ENCODE measurements at regions of chr11 and their contacts with region 1.

Region 1: GRCh38 chr11:128956401-128957201 is 13.9 kb upstream of the TP53AIP1 start:
- DNase-seq: peak; percentile 77
- H3K4me3 ChIP-seq: no peak overlapping the region
- H3K27ac ChIP-seq: no peak overlapping the region
- H3K4me1 ChIP-seq: no peaks in the 10 kb centered on the region
- H3K27me3 ChIP-seq: peaks cover 10 to 23% of the 10 kb centered on the region in 2 experiments
- CTCF ChIP-seq: peak; percentile 55 to 61
- POLR2A ChIP-seq: no peak

Region 2: GRCh38 chr11:127898422-127899365 is 1057.9 kb before region 1 on chr11:
- CTCF ChIA-PET with region 1: no interaction called
- POLR2A ChIA-PET with region 1: no interaction called
- dilution Hi-C with region 1: no loop called
- intact Hi-C with region 1: no loop called
- DNase-seq: no peak
- H3K4me3 ChIP-seq: no peak overlapping the region
- H3K27ac ChIP-seq: no peak overlapping the region
- H3K4me1 ChIP-seq: no peaks in the 10 kb centered on the region
- H3K27me3 ChIP-seq: no peaks in the 10 kb centered on the region
- CTCF ChIP-seq: no peak
- POLR2A ChIP-seq: no peak

Region 3: GRCh38 chr11:128157423-128158298 is 798.9 kb before region 1 on chr11:
- CTCF ChIA-PET with region 1: interaction called, 14 read pairs
- POLR2A ChIA-PET with region 1: no interaction called
- dilution Hi-C with region 1: no loop called
- intact Hi-C with region 1: no loop called
- DNase-seq: peak; percentile 87
- H3K4me3 ChIP-seq: peak overlapping the region in 1 of 3 experiments; percentile 48
- H3K27ac ChIP-seq: peak overlapping the region; percentile 75
- H3K4me1 ChIP-seq: peaks cover 16% of the 10 kb centered on the region
- H3K27me3 ChIP-seq: no peaks in the 10 kb centered on the region
- CTCF ChIP-seq: peak; percentile 66 to 86
- POLR2A ChIP-seq: no peak

Region 4: GRCh38 chr11:128759597-128759996 is 197.0 kb before region 1 on chr11:
- CTCF ChIA-PET with region 1: no interaction called
- POLR2A ChIA-PET with region 1: no interaction called
- dilution Hi-C with region 1: no loop called
- intact Hi-C with region 1: no loop called
- DNase-seq: no peak
- H3K4me3 ChIP-seq: no peak overlapping the region
- H3K27ac ChIP-seq: peak overlapping the region; percentile 48
- H3K4me1 ChIP-seq: peaks cover 19% of the 10 kb centered on the region
- H3K27me3 ChIP-seq: no peaks in the 10 kb centered on the region
- CTCF ChIP-seq: no peak
- POLR2A ChIP-seq: peak; percentile 55

Region 5: GRCh38 chr11:128874427-128874826 is 82.2 kb before region 1 on chr11:
- CTCF ChIA-PET with region 1: interaction called, 39 read pairs
- POLR2A ChIA-PET with region 1: no interaction called
- dilution Hi-C with region 1: no loop called
- intact Hi-C with region 1: no loop called
- DNase-seq: no peak
- H3K4me3 ChIP-seq: no peak overlapping the region
- H3K27ac ChIP-seq: no peak overlapping the region
- H3K4me1 ChIP-seq: no peaks in the 10 kb centered on the region
- H3K27me3 ChIP-seq: peaks cover 31 to 38% of the 10 kb centered on the region in 2 experiments
- CTCF ChIP-seq: no peak
- POLR2A ChIP-seq: no peak

Region 6: DNA sequence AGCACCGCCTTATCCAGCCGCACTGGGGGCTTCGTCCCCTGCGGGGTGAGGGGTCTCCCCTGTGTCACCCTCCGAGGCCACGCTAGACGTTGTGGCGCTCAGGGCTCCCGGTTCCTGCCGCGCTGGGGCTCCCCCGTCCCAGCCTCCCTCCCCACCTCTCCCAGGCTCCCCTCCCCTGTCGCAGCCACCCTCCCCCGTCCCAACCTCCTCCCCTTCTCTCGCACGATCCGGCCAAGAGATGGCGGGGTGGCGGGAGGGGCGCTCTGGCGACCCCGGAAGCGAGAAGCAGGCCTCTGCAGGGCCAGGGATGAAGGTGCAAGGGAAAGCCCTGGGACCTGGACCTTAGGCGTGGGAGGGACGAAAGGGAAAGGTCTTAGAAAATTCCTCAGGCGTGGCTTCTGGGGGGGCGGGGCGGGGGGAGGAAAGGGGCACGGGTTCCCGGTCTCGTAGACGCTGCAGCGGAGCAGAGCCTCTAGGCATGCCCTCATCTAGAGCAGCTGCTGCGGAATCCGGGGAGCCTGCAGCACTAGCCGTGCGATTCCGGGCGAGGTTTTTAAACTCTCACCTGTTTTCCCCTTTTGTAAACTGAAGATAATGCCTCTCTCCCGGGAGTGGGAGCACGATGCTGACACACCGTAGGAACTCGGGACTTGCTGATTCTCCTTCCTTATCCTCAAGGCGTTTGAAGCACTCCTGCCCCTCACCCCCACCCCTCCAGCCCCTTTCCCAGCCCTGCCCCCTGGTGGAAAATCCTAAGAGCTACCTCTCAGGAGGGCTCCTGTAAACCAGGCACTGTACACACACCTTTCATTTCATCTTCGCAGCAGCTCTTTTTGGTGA is 51.0 kb before region 1 on chr11:
- CTCF ChIA-PET with region 1: interaction called, 31 read pairs
- POLR2A ChIA-PET with region 1: interaction called, 4 read pairs
- dilution Hi-C with region 1: no loop called
- intact Hi-C with region 1: no loop called
- DNase-seq: no peak
- H3K4me3 ChIP-seq: peak overlapping the region in 1 of 3 experiments; percentile 40
- H3K27ac ChIP-seq: no peak overlapping the region
- H3K4me1 ChIP-seq: peaks cover 17% of the 10 kb centered on the region
- H3K27me3 ChIP-seq: peaks cover 22 to 23% of the 10 kb centered on the region in 2 experiments
- CTCF ChIP-seq: peak; percentile 19 to 41
- POLR2A ChIP-seq: no peak

Region 7: DNA sequence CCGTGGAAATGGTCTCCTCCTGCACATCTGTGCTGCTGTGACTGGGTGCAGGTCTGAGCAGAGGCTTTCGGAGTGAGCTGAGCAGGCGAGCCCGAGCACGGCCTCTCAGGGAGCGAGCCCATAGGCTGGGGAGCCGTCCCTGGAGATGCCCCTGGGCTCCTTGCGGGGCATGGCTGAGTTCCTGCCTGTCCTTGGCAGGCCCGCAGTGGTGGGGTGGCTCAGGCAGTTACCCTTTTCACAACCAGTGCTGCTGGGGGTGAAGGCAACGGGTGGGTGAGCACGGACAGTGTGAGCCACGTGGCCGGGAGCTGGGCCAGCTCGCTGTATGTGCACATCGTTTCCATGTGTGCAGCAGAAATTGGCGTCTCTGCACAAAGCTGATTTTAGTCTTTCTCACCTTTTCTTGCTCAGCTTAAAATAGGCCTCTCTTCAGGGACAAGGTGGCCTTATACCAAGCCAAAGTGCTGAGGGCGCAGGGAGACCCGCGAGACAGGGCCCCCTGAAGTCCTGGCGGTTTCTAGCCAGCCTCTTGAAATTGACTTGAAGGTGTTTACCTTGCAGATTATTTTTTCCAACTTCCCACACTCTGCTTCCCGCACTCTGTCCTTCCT is 13.7 kb before region 1 on chr11 and contains the start of gene TP53AIP1:
- CTCF ChIA-PET with region 1: interaction called, 18 read pairs
- POLR2A ChIA-PET with region 1: interaction called, 6 read pairs
- dilution Hi-C with region 1: no loop called
- intact Hi-C with region 1: no loop called
- DNase-seq: no peak
- H3K4me3 ChIP-seq: no peak within 1 kb of the TSS
- H3K27ac ChIP-seq: no peak within 1 kb of the TSS
- H3K4me1 ChIP-seq: no peaks in the 10 kb centered on the region
- H3K27me3 ChIP-seq: peaks cover 0 to 2% of the 10 kb centered on the region in 2 experiments
- CTCF ChIP-seq: no peak
- POLR2A ChIP-seq: no peak
- total RNA-seq, gene TP53AIP1: not detected in 2 replicates

Region 8: GRCh38 chr11:129146191-129146590 is 189.6 kb after region 1 on chr11:
- CTCF ChIA-PET with region 1: no interaction called
- POLR2A ChIA-PET with region 1: no interaction called
- dilution Hi-C with region 1: no loop called
- intact Hi-C with region 1: no loop called
- DNase-seq: no peak
- H3K4me3 ChIP-seq: no peak overlapping the region
- H3K27ac ChIP-seq: no peak overlapping the region
- H3K4me1 ChIP-seq: peaks cover 14% of the 10 kb centered on the region
- H3K27me3 ChIP-seq: no peaks in the 10 kb centered on the region
- CTCF ChIP-seq: no peak
- POLR2A ChIP-seq: no peak

Region 9: DNA sequence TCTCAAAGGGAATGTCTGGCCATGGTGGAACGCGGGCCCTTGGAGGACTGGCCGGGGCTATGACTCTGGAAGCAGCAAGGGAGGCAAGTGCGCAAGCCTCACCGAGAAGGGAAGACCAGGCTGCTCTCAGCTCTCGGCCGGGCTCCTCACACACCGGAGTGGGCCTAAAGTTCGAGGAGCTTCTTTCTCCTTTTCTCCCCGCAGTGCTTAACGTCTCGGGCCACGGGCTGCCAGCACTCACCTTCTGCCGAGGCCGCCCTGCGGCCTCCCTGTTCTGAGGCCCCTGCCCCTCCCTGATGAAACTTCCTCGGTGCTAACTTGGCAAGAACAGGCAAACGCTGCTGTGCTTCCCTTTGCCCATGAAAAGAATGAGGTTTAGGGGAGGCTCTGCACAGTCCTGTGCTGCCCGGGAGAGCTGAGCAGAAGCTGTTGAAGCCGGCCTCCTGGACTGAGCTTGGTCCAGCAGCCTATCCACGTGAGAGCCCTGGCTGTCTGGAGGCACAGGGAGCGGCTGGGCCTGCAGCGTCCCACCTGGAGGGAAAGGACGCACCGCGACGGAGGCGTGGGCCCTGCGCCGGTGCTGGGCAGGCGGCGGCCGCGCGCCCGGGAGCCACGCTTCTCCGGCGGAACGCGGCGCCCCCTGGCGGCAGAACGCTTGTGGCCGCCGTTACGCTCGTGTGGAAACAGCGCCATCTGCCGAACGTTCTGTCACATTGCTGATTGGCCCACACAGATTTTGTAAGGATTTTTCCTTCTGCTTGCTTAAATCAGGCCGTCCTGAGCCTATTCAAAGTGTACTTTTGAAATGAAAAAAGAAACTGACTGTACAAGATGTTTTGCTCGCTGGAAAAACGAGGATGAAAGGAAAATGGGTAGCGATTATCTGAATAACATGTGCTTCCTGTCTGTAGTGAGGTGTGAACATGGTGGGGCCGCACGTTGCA is 794.0 kb after region 1 on chr11:
- CTCF ChIA-PET with region 1: no interaction called
- POLR2A ChIA-PET with region 1: no interaction called
- dilution Hi-C with region 1: no loop called
- intact Hi-C with region 1: loop called (anchors 5 kb)
- DNase-seq: peak; percentile 72
- H3K4me3 ChIP-seq: no peak overlapping the region
- H3K27ac ChIP-seq: no peak overlapping the region
- H3K4me1 ChIP-seq: no peaks in the 10 kb centered on the region
- H3K27me3 ChIP-seq: peaks cover 0 to 4% of the 10 kb centered on the region in 2 experiments
- CTCF ChIP-seq: peak; percentile 96 to 98
- POLR2A ChIP-seq: no peak